Left cardiac atrium (tissue), 4 donors: ENCODE measurements at regions of chr18 and their contacts with region 1.

Region 1: DNA sequence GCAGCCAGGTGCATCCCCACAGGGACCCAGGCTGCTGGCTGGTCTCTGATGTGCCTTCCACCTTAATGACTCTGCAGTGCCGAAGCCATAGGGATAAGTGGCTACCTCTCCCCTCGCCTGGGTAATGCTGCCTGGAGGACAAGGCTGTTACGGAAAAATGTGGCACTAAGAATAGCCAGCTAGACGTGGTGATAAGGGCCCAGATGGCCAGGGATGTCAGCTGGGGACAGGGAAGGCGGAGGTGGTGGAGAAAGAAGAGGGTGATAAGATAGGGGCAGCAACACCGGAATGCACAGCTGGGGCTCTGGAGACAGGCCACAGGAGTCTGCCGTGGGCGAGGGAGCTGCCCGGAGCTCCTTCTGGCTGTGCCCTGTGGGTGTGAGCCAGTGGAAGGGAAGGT is 170.6 kb downstream of the FHOD3 start:
- DNase-seq: peak; percentile 67
- ATAC-seq: peak; percentile 83

Region 2: GRCh38 chr18:36333414-36333813 is 134.7 kb before region 1 on chr18:
- intact Hi-C with region 1: loop called in 1 of 2 experiments (anchors 5 kb)
- DNase-seq: no peak
- ATAC-seq: no peak